Ovary (tissue), 10 donors: ENCODE measurements at regions of chr16 and their contacts with region 1.

Region 1: DNA sequence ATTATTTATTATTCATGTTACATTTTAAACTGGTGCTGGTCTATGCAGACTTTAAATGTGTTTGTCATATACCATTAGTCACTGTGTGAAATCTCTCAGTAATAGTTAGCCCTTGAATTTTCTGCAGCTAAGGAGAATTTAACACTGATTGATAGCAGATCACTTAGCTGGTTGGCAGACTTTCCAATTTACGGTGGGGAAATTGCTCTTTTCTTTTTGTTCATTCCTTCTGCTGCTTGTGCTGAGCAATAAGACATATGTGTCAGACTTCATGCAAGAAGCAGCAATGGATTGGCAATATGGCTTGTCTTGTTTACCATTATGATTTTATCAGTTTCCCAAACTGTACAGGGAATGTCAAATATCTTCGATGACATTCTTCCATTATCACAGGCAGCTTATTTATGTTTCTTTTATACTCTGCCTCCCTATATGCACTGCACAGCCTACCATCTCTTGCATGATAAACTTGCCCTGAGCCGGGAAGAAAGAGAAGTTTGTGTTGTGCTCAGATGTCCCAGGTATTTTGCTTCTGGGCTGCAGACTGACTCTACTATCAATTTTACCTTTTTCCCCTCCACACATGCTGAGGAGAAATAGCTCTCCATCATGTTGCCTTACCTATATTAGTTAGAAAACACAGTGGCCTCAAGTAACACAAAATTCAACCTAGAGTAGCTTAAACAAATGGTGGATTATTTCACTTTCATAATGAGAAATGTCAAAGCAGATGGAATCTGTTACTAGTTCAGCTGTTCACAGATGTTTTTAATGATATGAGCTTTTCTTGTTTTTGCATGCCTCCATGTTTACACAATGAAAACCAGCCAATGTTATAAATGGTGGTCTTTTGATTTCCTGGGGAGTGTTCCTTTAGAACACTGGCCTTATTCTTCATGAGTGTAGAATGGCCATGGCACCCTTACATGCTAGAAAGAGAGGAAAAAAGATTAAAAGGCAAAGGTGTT is 968.1 kb upstream of the GOT2 start:
- DNase-seq: no peak
- H3K4me3 ChIP-seq: no peak overlapping the region
- H3K27ac ChIP-seq: no peak overlapping the region
- H3K4me1 ChIP-seq: no peaks in the 10 kb centered on the region
- H3K27me3 ChIP-seq: no peaks in the 10 kb centered on the region
- CTCF ChIP-seq: no peak
- EP300 ChIP-seq: no peak
- POLR2A ChIP-seq: no peak

Region 2: GRCh38 chr16:59179446-59180082 is 522.7 kb before region 1 on chr16:
- intact Hi-C with region 1: loop called in 1 of 4 experiments (anchors 10 kb)
- DNase-seq: no peak
- H3K4me3 ChIP-seq: no peak overlapping the region
- H3K27ac ChIP-seq: no peak overlapping the region
- H3K4me1 ChIP-seq: no peaks in the 10 kb centered on the region
- H3K27me3 ChIP-seq: no peaks in the 10 kb centered on the region
- CTCF ChIP-seq: no peak
- EP300 ChIP-seq: no peak
- POLR2A ChIP-seq: no peak